Psoas muscle (tissue), 8 donors: ENCODE measurements at regions of chr11 and their contacts with region 1.

Region 1: DNA sequence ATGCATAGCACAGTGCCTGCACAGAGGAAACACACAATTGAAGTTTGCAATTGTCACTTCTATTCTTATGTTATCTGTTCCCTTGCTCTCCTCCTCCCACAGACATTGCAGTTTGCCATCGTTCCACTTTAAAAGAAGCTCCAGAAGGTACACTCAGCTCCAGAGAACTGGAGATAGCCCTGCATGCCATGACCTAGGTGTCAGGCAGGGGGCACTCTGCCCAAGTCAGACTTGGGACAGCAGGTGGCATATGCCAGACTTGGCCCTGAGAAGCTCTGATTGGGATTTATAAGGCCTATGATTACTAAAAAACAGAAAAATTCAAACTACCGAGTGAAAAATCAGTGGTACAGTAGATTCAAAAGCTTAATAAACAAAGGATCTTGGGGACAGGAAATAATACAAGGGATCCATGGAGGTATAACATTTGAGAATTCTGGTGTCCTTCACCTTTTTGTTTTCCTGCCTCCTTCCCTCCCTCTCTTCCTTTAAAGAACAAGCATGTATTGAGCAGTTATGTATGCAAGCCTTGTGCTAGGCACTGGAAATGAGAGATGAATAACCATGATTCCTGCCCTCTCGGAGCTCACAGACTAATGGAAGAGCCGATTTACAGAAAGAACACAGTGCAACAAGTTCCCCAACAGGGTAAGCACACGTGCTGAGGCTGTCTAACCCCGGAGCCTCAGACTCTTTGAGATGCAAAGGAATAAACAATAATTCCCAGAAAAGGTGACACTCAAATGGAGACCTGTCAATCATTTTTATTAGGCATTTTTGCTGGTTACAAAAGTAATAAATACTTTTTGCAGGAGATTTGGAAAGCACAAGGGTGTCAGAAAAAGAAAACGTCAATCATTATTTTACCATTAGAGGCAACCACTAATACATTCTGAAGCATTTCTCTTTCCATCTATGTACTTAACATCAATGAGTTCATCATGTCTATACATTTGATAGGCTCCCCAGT is 39.8 kb downstream of the TENM4 start:
- DNase-seq: peak in 1 of 2 donors; percentile 26
- ATAC-seq: peak in 3 of 4 donors; percentile 48 to 69 (median 66)
- H3K4me3 ChIP-seq: no peak overlapping the region
- H3K27ac ChIP-seq: no peak overlapping the region
- H3K4me1 ChIP-seq: no peaks in the 10 kb centered on the region
- H3K27me3 ChIP-seq: peaks cover 0 to 7% (median 0%) of the 10 kb centered on the region in 3 donors
- CTCF ChIP-seq: peak; percentile 46

Region 2: DNA sequence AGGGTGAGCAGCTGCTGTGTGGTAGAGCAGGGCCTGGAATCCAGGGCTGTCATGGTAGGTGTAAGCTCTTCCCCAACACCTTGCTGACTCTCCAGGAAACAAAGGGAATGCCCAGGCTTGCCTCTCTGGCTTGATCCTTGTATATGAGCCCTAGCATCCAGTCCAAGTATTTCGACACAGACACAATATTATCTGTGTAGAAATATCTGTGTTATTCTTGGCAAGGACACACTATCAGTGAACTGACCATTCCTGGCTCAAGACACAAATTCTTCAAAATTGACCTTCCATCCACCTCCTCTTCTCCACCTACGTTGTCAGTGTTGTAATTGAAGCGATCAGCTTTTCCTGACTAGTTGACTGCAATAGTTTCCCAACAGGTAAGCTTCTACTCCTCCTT is 514.4 kb before region 1 on chr11:
- intact Hi-C with region 1: no loop called
- DNase-seq: no peak
- ATAC-seq: no peak
- H3K4me3 ChIP-seq: no peak overlapping the region
- H3K27ac ChIP-seq: no peak overlapping the region
- H3K4me1 ChIP-seq: no peaks in the 10 kb centered on the region
- H3K27me3 ChIP-seq: no peaks in the 10 kb centered on the region
- CTCF ChIP-seq: no peak

Region 3: DNA sequence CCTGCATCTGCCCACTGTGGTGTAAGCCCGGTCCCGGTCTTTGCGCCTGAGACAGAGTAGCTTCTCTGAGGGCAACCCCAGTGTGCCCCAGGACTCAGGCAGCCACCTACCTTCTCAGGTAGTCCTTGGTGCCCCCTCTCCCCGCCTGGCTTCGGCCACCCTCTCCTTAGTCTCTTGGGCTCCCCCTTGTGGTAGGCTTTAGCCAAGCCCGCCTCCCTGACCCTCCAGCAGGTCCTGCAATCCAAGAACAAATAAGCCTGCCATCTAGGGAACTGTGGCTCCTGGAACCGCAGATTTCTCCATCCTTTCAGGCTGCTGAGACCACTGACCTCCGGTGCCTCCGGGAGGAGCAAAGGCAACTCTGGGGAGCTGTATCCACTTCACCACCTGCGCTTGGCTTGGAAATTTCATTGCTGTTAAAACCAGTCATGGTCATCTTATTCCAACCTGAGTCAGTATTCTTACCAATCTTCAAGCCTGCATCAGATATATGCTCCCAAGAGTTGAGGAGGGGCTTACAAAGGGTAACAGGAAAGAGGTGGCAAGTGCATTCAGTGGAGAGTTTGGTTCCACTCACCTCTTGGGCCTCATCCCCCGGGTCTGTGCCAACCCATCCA is 92.7 kb after region 1 on chr11:
- intact Hi-C with region 1: loop called in 1 of 2 experiments (anchors 5 kb)
- DNase-seq: peak; percentile 59 to 77
- ATAC-seq: peak; percentile 53 to 80 (median 72)
- H3K4me3 ChIP-seq: no peak overlapping the region
- H3K27ac ChIP-seq: no peak overlapping the region
- H3K4me1 ChIP-seq: no peaks in the 10 kb centered on the region
- H3K27me3 ChIP-seq: no peaks in the 10 kb centered on the region
- CTCF ChIP-seq: peak; percentile 74